ENCODE measurements at regions of chr9 and their contacts with region 1.

Region 1: DNA sequence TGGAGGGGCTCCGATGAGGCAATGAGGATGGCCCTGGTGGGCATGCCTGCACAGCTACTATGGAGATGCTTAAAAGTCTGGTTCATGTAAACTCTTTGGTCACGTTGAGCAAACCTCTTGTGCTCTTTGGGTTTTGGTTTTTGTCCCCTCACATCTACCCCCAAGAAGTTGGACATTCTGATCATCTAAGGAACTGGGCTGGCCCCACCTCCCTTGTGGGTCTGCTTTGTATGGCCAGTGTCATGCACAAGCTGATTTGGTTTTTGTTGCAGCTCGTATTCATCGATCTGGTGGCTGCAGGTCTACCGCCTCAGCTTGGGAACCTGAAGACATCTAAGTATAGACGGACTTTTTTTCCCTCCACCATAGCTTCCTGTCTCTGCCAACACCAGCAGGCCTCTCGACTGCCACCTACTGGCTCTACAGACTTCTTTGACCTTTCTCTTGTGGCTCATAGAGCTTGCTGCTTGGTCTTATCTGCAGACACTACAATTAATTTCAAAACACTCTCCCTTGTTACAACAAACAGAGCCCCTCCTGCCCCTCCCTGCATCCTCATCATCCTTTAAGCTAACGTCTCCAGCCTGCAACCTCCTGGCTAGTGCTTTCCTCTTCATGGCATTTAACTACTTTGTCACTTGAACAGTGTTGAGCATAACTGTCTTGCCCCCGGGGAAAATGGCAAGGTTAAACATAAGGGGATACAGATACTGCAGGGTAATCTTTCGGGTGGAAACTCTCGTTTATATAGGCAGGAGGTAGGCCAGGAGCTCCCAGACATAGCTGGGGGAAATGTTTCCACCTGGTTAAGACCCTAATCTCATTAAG is 34.5 kb downstream of the TSTD2 start:
- DNase-seq: peak; percentile 82
- H3K4me3 ChIP-seq: no peak overlapping the region
- H3K27ac ChIP-seq: no peak overlapping the region
- H3K4me1 ChIP-seq: no peaks in the 10 kb centered on the region
- H3K27me3 ChIP-seq: peaks cover 0 to 4% of the 10 kb centered on the region in 2 experiments
- CTCF ChIP-seq: peak; percentile 90 to 91
- POLR2A ChIP-seq: no peak

Region 2: DNA sequence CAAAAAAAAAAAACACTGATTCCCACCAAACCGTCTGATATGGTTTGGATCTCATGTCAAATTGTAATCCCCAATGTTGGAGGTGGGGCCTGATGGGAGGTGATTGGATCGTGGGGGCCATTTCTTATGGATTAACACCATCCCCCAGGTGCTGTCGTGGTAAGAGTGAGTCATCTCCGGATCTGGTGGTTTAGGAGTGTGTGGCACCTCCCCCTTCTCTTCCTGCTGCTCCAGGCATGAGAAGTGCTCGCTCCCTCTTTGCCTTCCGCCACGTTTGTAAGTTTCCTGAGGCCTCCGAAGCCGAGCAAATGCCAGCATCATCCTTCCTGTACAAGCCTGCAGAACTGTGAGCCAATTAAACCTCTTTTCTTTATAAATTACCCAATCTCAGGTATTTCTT is 1341.9 kb before region 1 on chr9:
- CTCF ChIA-PET with region 1: no interaction called
- POLR2A ChIA-PET with region 1: no interaction called
- dilution Hi-C with region 1: no loop called
- intact Hi-C with region 1: no loop called
- DNase-seq: peak; percentile 23
- H3K4me3 ChIP-seq: no peak overlapping the region
- H3K27ac ChIP-seq: no peak overlapping the region
- H3K4me1 ChIP-seq: peaks cover 2% of the 10 kb centered on the region
- H3K27me3 ChIP-seq: no peaks in the 10 kb centered on the region
- CTCF ChIP-seq: no peak
- POLR2A ChIP-seq: no peak

Region 3: DNA sequence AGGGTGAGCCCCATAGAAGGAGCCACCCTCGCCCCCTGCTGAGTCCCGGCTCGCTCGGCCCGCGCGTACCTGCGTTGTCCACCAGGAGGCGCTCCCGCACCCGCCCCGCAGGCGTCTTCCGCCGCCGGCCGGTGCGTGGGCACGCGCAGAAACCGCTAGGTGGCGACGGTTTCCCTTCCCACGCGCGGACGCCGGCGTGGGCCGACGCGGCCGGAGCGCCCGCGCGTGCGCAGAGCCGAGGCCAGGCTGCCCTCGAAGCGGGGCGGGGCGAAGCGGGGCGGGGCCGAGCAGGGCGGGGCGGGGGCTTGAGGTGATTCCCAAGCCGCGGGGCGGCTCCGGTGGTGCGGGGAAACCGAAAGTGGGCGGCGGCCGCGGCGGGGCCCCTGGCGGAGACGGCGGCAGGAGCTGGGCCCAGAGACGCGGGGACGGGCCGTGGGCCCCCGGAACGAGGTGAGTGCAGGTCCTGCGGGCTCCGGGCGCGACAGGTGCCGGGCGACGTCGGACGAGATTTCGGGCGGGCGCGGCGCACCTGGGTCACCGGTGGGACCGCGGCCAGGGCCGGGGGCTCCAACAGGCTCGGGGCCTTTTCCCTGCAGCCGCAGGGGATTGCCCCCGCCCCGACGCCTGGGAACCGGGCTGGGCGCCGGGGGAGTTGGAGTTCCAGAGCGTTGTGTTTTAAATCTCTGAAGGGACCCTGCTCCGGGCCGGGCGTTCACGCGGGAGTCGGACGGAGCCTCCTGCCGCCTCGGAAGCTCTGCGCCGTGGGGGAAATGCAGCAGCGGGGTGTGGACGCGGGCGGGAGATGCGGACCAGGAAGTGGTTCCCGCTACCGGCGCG is 186.7 kb before region 1 on chr9 and contains the start of gene TDRD7:
- CTCF ChIA-PET with region 1: interaction called, 79 read pairs
- POLR2A ChIA-PET with region 1: no interaction called
- dilution Hi-C with region 1: no loop called
- intact Hi-C with region 1: loop called (anchors 1 kb)
- DNase-seq: peak; percentile 82
- H3K4me3 ChIP-seq: peak within 1 kb of the TSS; percentile 73 to 92 (median 90)
- H3K27ac ChIP-seq: peak within 1 kb of the TSS; percentile 11
- H3K4me1 ChIP-seq: peaks cover 8% of the 10 kb centered on the region
- H3K27me3 ChIP-seq: peaks cover 23 to 29% of the 10 kb centered on the region in 2 experiments
- CTCF ChIP-seq: peak; percentile 99
- POLR2A ChIP-seq: no peak
- total RNA-seq, gene TDRD7: 11.2 and 11.5 TPM in 2 replicates

Region 4: GRCh38 chr9:97459099-97459725 is 139.5 kb before region 1 on chr9:
- CTCF ChIA-PET with region 1: interaction called, 21 read pairs
- POLR2A ChIA-PET with region 1: no interaction called
- dilution Hi-C with region 1: loop called (anchors 25 kb)
- intact Hi-C with region 1: no loop called
- DNase-seq: no peak
- H3K4me3 ChIP-seq: no peak overlapping the region
- H3K27ac ChIP-seq: no peak overlapping the region
- H3K4me1 ChIP-seq: no peaks in the 10 kb centered on the region
- H3K27me3 ChIP-seq: no peaks in the 10 kb centered on the region
- CTCF ChIP-seq: no peak
- POLR2A ChIP-seq: no peak

Region 5: GRCh38 chr9:97487107-97487506 is 111.6 kb before region 1 on chr9:
- CTCF ChIA-PET with region 1: interaction called, 26 read pairs
- POLR2A ChIA-PET with region 1: no interaction called
- dilution Hi-C with region 1: no loop called
- intact Hi-C with region 1: no loop called
- DNase-seq: no peak
- H3K4me3 ChIP-seq: no peak overlapping the region
- H3K27ac ChIP-seq: no peak overlapping the region
- H3K4me1 ChIP-seq: no peaks in the 10 kb centered on the region
- H3K27me3 ChIP-seq: no peaks in the 10 kb centered on the region
- CTCF ChIP-seq: peak; percentile 26 to 27
- POLR2A ChIP-seq: no peak

Region 6: GRCh38 chr9:97518909-97519307 is 79.8 kb before region 1 on chr9:
- CTCF ChIA-PET with region 1: interaction called, 21 read pairs
- POLR2A ChIA-PET with region 1: no interaction called
- dilution Hi-C with region 1: no loop called
- intact Hi-C with region 1: no loop called
- DNase-seq: peak; percentile 97
- H3K4me3 ChIP-seq: peak overlapping the region in 1 of 3 experiments; percentile 25
- H3K27ac ChIP-seq: peak overlapping the region; percentile 78
- H3K4me1 ChIP-seq: peaks cover 20% of the 10 kb centered on the region
- H3K27me3 ChIP-seq: no peaks in the 10 kb centered on the region
- CTCF ChIP-seq: no peak
- POLR2A ChIP-seq: peak; percentile 23

Region 7: GRCh38 chr9:97559111-97559514 is 39.6 kb before region 1 on chr9:
- CTCF ChIA-PET with region 1: interaction called, 52 read pairs
- POLR2A ChIA-PET with region 1: no interaction called
- dilution Hi-C with region 1: no loop called
- intact Hi-C with region 1: loop called (anchors 2 kb)
- DNase-seq: no peak
- H3K4me3 ChIP-seq: no peak overlapping the region
- H3K27ac ChIP-seq: no peak overlapping the region
- H3K4me1 ChIP-seq: peaks cover 15% of the 10 kb centered on the region
- H3K27me3 ChIP-seq: peaks cover 22 to 26% of the 10 kb centered on the region in 2 experiments
- CTCF ChIP-seq: no peak
- POLR2A ChIP-seq: no peak

Region 8: DNA sequence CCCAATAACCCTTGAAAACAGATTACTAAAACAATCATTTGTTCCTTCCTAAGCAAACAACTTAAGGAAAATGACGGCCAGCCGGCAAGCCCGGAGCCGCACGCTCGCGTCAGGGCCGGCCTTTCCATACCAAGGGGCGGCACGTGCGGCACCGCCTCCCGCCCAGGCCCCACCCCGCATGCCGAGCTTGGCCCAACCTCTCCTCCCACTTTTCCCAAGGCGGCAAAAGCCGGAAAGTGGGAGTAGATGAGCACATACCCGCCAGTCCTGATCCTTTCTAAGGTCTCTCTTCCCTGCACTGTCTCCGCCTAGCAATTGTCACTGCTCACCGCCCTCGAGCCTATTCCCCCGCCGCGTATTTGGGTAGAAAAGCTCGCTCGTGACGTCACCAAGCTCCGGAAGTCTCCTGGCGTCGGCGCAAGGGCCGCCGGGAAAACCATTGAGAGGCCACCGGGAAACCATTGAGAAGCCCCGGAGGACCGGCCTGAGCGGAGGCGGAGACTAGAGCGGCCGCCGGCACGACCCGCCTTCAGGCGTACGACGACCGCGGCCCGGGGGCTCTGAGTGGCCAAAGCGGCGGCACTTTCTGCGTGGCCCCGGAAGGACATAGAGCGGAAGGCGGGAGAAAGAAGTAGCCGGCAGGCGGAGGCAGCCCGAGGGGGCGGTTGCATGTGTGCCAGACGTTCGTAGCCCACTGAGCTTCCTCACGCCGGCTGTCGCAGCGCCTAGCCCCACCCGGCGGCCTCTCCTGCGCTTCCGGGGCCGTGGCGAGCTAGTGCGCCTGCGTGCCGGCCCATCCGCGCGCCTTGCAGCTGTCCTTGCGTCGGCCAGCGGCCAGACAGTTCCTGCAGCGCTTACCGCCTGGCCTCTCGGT is 34.5 kb after region 1 on chr9 and contains the starts of genes NCBP1 and TSTD2:
- CTCF ChIA-PET with region 1: interaction called, 10 read pairs
- POLR2A ChIA-PET with region 1: no interaction called
- dilution Hi-C with region 1: no loop called
- intact Hi-C with region 1: no loop called
- DNase-seq: peak; percentile 99
- H3K4me3 ChIP-seq: peak within 1 kb of the TSS; percentile 83 to 100 (median 99)
- H3K27ac ChIP-seq: peak within 1 kb of the TSS; percentile 94
- H3K4me1 ChIP-seq: peaks cover 28% of the 10 kb centered on the region
- H3K27me3 ChIP-seq: no peaks in the 10 kb centered on the region
- CTCF ChIP-seq: peak in 1 of 2 donors; percentile 12
- POLR2A ChIP-seq: peak; percentile 90
- total RNA-seq, gene NCBP1: 42.8 and 45.3 TPM in 2 replicates
- total RNA-seq, gene TSTD2: 15.1 and 15.9 TPM in 2 replicates

Region 9: GRCh38 chr9:97759581-97760288 is 161.1 kb after region 1 on chr9:
- CTCF ChIA-PET with region 1: no interaction called
- POLR2A ChIA-PET with region 1: no interaction called
- dilution Hi-C with region 1: no loop called
- intact Hi-C with region 1: no loop called
- DNase-seq: no peak
- H3K4me3 ChIP-seq: no peak overlapping the region
- H3K27ac ChIP-seq: no peak overlapping the region
- H3K4me1 ChIP-seq: no peaks in the 10 kb centered on the region
- H3K27me3 ChIP-seq: peaks cover 6% of the 10 kb centered on the region in 2 experiments
- CTCF ChIP-seq: no peak
- POLR2A ChIP-seq: no peak